Breast epithelium (tissue), 4 donors: ENCODE measurements at regions of chr2 and their contacts with region 1.

Region 1: DNA sequence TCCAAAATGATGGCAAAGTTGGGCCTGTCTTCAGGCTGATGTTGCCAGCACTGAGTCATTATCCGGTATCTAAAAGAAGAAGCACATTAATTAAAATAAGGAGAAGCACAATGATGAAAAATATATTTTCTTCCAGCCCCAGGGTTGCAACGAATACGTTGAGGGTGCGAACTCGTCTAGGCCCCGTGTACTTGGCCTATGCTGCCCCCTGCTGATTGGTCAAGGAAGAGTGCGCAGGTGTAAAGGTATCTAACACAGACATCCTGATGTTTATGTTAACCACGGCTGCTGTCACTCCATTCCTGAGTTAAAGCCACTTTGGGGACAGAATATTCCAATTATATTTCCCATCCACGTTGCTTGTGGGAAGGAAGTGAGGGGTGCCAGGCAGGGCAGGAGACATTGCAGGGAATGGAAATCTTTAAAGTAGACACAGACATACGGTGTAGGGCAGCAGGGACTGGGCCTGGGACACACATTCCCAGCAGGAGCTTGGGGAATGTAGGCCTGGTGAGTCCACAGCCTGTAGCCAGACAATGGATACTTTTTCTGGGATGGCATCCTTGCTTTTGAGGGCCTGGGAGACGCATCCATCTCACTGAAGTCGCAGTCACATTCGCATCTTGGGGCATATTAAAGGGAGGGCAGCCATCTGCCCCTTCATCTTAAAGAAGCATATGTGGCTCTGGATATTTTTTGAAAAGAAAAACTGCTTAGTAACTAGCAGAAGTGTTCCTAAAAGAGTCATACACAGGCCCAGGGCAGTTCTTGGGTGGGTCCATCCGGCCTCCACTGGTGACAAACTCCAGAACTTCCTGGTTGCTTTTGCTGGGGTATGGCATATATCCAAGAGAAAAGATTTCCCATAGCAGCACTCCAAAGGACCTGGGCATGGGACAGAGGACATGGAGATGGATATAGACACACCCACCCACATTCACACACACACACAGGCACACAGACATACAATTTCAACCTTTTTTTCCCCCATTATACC is 81.9 kb downstream of the CLIP4 start:
- DNase-seq: peak; percentile 46 to 69
- H3K4me3 ChIP-seq: no peak overlapping the region
- H3K27ac ChIP-seq: peak overlapping the region in 1 of 2 donors; percentile 27
- H3K4me1 ChIP-seq: no peaks in the 10 kb centered on the region
- H3K27me3 ChIP-seq: no peaks in the 10 kb centered on the region
- CTCF ChIP-seq: peak; percentile 60 to 88 (median 74)
- POLR2A ChIP-seq: no peak

Region 2: GRCh38 chr2:28934769-28935168 is 262.3 kb before region 1 on chr2:
- intact Hi-C with region 1: loop called (anchors 5 kb)
- DNase-seq: no peak
- H3K4me3 ChIP-seq: no peak overlapping the region
- H3K27ac ChIP-seq: no peak overlapping the region
- H3K4me1 ChIP-seq: no peaks in the 10 kb centered on the region
- H3K27me3 ChIP-seq: no peaks in the 10 kb centered on the region
- CTCF ChIP-seq: no peak
- POLR2A ChIP-seq: no peak